Activated T-helper 2 cell treated with anti-CD3 and anti-CD28 coated beads, Interferon-gamma antibody, Interleukin-2, Interleukin-4, amounts not matched to agents 10 μg/mL and 5 μg/mL and 100 μg/mL, durations not matched to agents 14 hours and 24 hours and 36 hours (primary cell): ENCODE measurements at regions of chr9 and their contacts with region 1.

Region 1: DNA sequence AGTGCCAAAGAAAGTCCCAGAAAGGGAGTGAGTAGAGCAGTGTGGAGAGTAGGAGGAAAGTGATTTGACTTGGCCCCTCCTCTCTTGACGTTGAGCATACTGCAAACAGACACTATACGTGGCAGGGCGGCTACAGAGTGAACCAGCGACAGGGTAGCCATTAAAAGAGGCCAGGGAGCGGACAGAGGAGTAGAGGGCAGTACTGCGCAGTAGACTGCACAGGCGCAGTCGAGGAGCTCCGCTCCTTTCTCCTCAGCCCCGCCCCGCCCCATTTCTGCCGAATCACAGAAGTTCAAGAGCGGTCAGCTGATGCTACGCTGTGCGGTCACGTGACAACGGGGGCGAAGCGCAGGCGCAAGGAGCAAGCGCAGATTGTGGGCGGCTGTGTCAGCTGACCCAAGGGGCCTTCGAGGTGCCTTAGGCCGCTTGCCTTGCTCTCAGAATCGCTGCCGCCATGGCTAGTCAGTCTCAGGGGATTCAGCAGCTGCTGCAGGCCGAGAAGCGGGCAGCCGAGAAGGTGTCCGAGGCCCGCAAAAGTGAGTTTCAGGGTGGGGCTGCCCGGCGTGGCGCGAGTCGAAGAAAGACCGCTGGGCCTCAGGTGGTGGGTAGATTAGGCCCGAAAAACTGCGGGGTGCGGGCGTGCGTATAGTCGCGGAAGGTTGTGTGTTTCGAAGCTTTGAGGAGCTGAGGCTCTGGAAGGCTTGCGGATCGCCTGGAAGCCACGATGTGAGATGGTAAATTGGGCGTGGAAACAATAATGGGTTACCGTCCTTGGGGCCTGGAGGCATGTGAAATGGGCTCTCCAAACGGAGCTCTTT is at the start of gene ATP6V1G1:
- DNase-seq: peak; percentile 99
- H3K4me3 Mint-ChIP-seq: peak within 1 kb of the TSS; percentile 98
- H3K27ac Mint-ChIP-seq: peak within 1 kb of the TSS; percentile 98
- H3K4me1 Mint-ChIP-seq: peaks cover 40% of the 10 kb centered on the region
- H3K27me3 Mint-ChIP-seq: peaks cover 4% of the 10 kb centered on the region
- total RNA-seq, gene ATP6V1G1: 45.2 and 48.1 TPM in 2 replicates

Region 2: DNA sequence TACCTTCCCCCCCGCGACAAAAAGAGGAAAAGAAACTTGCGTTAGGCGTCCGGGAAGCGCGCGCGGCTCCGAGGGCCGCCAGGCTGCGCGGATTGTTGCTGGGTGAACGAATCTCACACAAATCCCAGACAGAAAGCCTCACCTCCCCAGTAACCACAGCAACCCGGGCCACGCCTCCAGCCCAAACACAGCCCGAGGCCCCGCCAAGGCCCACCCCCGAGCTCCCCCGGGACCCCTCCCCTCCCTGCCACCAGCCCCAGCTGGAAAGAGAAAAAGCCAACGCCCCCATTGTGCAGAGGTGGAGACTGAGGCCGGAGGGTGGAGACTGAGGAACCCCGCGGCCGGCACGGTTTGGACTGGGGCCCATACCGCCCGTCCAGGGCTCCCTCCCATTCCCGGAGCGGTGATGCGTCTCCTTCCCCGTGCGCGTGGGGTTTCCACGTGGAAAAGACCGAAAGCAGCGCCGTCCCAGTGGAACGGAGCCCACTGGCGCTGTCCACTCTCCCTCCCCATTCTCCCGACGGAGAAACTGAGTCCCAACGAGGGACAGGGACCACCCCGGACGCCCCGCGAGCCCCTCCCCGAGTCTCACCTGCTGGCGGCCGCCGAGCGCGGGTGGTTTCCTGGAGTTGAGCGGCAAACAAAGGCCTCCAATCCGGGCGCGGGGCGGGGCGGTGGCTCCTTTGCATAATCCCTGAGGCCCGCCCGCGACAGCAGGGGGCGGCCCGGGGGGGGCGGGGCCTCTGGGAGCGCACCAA is 189.6 kb before region 1 on chr9:
- intact Hi-C with region 1: loop called (anchors 2 kb)
- DNase-seq: peak; percentile 92
- H3K4me3 Mint-ChIP-seq: peak overlapping the region; percentile 85
- H3K27ac Mint-ChIP-seq: peak overlapping the region; percentile 73
- H3K4me1 Mint-ChIP-seq: peaks cover 31% of the 10 kb centered on the region
- H3K27me3 Mint-ChIP-seq: no peaks in the 10 kb centered on the region

Region 3: GRCh38 chr9:114487607-114488300 is 99.8 kb before region 1 on chr9:
- intact Hi-C with region 1: loop called (anchors 1 kb)
- DNase-seq: peak; percentile 40
- H3K4me3 Mint-ChIP-seq: no peak overlapping the region
- H3K27ac Mint-ChIP-seq: peak overlapping the region; percentile 1
- H3K4me1 Mint-ChIP-seq: peaks cover 29% of the 10 kb centered on the region
- H3K27me3 Mint-ChIP-seq: peaks cover 2% of the 10 kb centered on the region

Region 4: GRCh38 chr9:114611516-114612271 is 24.1 kb after region 1 on chr9:
- intact Hi-C with region 1: loop called (anchors 1 kb)
- DNase-seq: peak; percentile 14
- H3K4me3 Mint-ChIP-seq: peak overlapping the region; percentile 83
- H3K27ac Mint-ChIP-seq: peak overlapping the region; percentile 86
- H3K4me1 Mint-ChIP-seq: peaks cover 44% of the 10 kb centered on the region
- H3K27me3 Mint-ChIP-seq: no peaks in the 10 kb centered on the region

Region 5: GRCh38 chr9:114988962-114989599 is 401.5 kb after region 1 on chr9:
- intact Hi-C with region 1: loop called (anchors 5 kb)
- DNase-seq: no peak
- H3K4me3 Mint-ChIP-seq: no peak overlapping the region
- H3K27ac Mint-ChIP-seq: peak overlapping the region; percentile 97
- H3K4me1 Mint-ChIP-seq: peaks cover 59% of the 10 kb centered on the region
- H3K27me3 Mint-ChIP-seq: no peaks in the 10 kb centered on the region